Aorta (tissue), 5 donors: ENCODE measurements at regions of chrX and their contacts with region 1.

Region 1: GRCh38 chrX:84188320-84188834 is 378 bp upstream of the RPS6KA6 start:
- DNase-seq: peak; percentile 64 to 86
- ATAC-seq: peak; percentile 75
- H3K4me3 ChIP-seq: peak overlapping the region; percentile 67 to 79
- H3K27ac ChIP-seq: no peak overlapping the region
- H3K4me1 ChIP-seq: no peaks in the 10 kb centered on the region
- H3K27me3 ChIP-seq: no peaks in the 10 kb centered on the region

Region 2: DNA sequence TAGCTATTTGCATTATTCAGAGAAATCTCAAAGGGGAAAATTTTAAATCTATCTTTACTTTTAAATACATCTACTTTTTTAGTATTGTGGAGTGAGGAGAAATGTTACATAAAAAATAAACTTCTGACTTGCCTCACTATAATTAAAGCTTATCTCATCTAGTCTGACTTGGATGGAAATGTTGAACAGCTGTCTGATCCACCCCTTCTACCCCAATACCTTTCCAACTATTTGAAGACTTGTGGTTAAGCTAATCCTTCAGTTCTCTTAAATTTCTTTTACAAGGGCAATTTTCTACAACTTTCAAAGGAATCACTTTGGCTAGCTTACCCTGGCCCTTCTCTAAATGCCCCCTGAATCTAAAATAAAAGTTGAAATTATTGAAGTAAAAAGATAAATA is 16.9 kb after region 1 on chrX:
- intact Hi-C with region 1: no loop called
- DNase-seq: no peak
- ATAC-seq: no peak
- H3K4me3 ChIP-seq: no peak overlapping the region
- H3K27ac ChIP-seq: no peak overlapping the region
- H3K4me1 ChIP-seq: no peaks in the 10 kb centered on the region
- H3K27me3 ChIP-seq: no peaks in the 10 kb centered on the region

Region 3: DNA sequence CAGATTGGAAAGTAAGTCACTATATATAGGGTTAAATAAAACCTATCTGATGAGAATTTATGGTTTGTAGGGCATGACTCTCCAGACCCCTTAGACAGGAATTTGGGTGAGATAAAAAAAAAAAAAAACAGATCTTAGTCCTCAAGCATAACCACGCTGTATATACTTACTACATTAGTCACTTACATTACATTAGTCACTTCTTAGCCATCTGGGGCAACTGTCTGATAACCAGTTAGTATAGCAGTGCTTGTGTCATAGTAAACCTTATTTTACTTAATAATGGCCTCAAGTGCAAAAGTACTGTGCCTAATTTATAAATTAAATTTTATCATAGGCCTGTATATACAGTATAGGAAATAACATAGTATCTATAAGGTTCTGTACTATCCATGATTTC is 59.8 kb after region 1 on chrX:
- intact Hi-C with region 1: no loop called
- DNase-seq: no peak
- ATAC-seq: no peak
- H3K4me3 ChIP-seq: no peak overlapping the region
- H3K27ac ChIP-seq: no peak overlapping the region
- H3K4me1 ChIP-seq: no peaks in the 10 kb centered on the region
- H3K27me3 ChIP-seq: no peaks in the 10 kb centered on the region

Region 4: GRCh38 chrX:84501798-84502628 is 313.6 kb after region 1 on chrX and contains the start of gene HDX:
- intact Hi-C with region 1: loop called in 1 of 2 experiments (anchors 5 kb)
- DNase-seq: peak; percentile 93 to 94
- ATAC-seq: peak; percentile 97
- H3K4me3 ChIP-seq: peak within 1 kb of the TSS; percentile 47 to 81
- H3K27ac ChIP-seq: peak within 1 kb of the TSS in 1 of 2 donors; percentile 88
- H3K4me1 ChIP-seq: peaks cover 0 to 2% of the 10 kb centered on the region in 2 donors
- H3K27me3 ChIP-seq: no peaks in the 10 kb centered on the region
- total RNA-seq, gene HDX: 10.4 to 17.1 TPM